ENCODE measurements at regions of chr10 and their contacts with region 1.

Region 1: DNA sequence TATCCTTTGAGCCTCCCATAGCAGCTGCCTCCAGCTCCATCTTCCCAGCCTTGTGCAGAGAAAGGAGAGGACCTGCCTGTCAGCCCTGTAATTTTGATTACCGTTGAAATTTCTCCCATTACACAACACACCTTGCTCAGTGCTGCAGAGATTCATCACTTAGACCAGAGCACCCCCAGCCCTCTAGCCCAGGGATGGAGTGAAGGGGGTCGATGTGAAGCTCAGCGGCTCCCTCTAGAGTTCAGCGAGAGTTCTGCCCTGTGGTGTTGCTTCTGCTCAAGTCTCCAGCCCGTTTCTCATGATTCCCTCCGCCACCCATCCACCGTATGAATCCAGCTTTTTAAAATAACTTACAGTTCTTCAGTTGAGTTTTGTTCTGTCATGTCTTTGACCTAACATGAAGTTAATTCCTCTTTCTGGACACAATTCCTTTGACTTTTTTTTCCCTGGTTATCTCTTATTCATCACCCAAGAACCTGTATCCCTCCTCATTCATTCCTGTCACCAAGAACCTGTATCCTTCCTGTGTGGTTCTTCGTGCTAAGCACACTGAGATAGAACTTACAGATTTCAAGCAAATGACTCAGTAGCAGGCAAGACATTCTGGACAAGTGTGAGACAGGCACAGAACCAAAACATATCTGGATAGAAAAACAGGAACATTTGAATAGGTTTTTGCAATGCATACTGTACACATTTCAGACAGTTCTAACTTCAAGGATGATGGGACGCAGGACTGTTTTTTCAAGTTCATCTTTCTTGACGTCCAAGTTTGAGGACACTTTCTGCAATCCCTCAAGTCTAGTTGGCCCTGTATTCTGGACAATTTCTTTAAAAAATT is 35.0 kb upstream of the ZNF32 start:
- DNase-seq: no peak
- H3K4me3 ChIP-seq: no peak overlapping the region
- CTCF ChIP-seq: peak; percentile 59

Region 2: GRCh38 chr10:43671656-43672531 is 11.8 kb before region 1 on chr10:
- CTCF ChIA-PET with region 1: interaction called, 19 read pairs
- POLR2A ChIA-PET with region 1: no interaction called
- DNase-seq: no peak
- H3K4me3 ChIP-seq: no peak overlapping the region
- CTCF ChIP-seq: peak; percentile 56

Measured in AG04449 (cell line).